Natural killer cell (primary cell): ENCODE measurements at regions of chr18 and their contacts with region 1.

Region 1: DNA sequence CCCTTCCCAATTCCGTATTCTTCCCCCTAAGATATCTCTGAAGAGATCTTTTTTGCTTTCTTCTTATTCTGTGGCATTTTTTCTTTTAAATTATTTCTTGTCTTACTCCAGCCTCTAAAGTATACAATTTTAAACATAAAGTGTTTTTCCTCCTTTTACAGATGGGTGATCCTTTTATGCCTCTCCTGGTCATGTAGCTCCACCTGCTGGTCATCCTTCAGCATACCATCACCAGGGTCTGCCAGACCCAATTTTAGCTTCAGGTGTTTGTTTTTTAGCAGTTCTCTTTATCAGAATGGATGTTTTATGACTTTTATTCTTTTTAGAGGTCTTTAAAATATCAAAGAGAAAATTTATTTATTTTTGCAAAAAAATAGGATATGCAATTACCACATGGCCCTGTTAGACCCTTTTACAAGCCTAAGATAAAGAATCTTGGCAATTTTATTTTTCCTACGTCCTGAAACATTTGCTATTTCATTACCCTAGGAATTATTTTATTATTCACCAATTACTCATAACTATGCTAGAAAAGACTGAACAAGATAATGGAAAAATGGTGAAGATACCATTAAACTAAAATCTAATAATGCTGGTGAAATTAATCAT is 55.5 kb downstream of the PIGN start:
- DNase-seq: peak; percentile 26 to 82
- ATAC-seq: peak; percentile 42 to 78 (median 70)
- H3K4me3 ChIP-seq: no peak overlapping the region
- H3K4me3 Mint-ChIP-seq: no peak overlapping the region
- H3K27ac ChIP-seq: no peak overlapping the region
- H3K27ac Mint-ChIP-seq: no peak overlapping the region
- H3K4me1 ChIP-seq: no peaks in the 10 kb centered on the region
- H3K4me1 Mint-ChIP-seq: no peaks in the 10 kb centered on the region
- H3K27me3 ChIP-seq: no peaks in the 10 kb centered on the region
- H3K27me3 Mint-ChIP-seq: no peaks in the 10 kb centered on the region
- CTCF ChIP-seq: peak; percentile 99

Region 2: GRCh38 chr18:61551586-61551985 is 579.8 kb before region 1 on chr18:
- intact Hi-C with region 1: loop called (anchors 1 kb)
- DNase-seq: peak in 1 of 2 donors; percentile 58
- ATAC-seq: peak in 1 of 3 donors; percentile 52
- H3K4me3 ChIP-seq: no peak overlapping the region
- H3K4me3 Mint-ChIP-seq: no peak overlapping the region
- H3K27ac ChIP-seq: no peak overlapping the region
- H3K27ac Mint-ChIP-seq: no peak overlapping the region
- H3K4me1 ChIP-seq: no peaks in the 10 kb centered on the region
- H3K4me1 Mint-ChIP-seq: peaks cover 0 to 4% of the 10 kb centered on the region in 2 donors
- H3K27me3 ChIP-seq: no peaks in the 10 kb centered on the region
- H3K27me3 Mint-ChIP-seq: peaks cover 0 to 18% of the 10 kb centered on the region in 2 donors
- CTCF ChIP-seq: peak; percentile 57

Region 3: GRCh38 chr18:61581578-61582201 is 549.7 kb before region 1 on chr18:
- intact Hi-C with region 1: loop called (anchors 1 kb)
- DNase-seq: peak; percentile 65 to 72
- ATAC-seq: peak; percentile 71 to 90 (median 77)
- H3K4me3 ChIP-seq: no peak overlapping the region
- H3K4me3 Mint-ChIP-seq: peak overlapping the region; percentile 21
- H3K27ac ChIP-seq: no peak overlapping the region
- H3K27ac Mint-ChIP-seq: no peak overlapping the region
- H3K4me1 ChIP-seq: peaks cover 7% of the 10 kb centered on the region
- H3K4me1 Mint-ChIP-seq: peaks cover 7 to 10% of the 10 kb centered on the region in 2 donors
- H3K27me3 ChIP-seq: peaks cover 5% of the 10 kb centered on the region
- H3K27me3 Mint-ChIP-seq: peaks cover 27 to 56% of the 10 kb centered on the region in 2 donors
- CTCF ChIP-seq: peak; percentile 88

Region 4: GRCh38 chr18:61635901-61636528 is 495.4 kb before region 1 on chr18:
- intact Hi-C with region 1: loop called (anchors 1 kb)
- DNase-seq: peak in 1 of 2 donors; percentile 56
- ATAC-seq: peak in 1 of 3 donors; percentile 38
- H3K4me3 ChIP-seq: no peak overlapping the region
- H3K4me3 Mint-ChIP-seq: no peak overlapping the region
- H3K27ac ChIP-seq: no peak overlapping the region
- H3K27ac Mint-ChIP-seq: no peak overlapping the region
- H3K4me1 ChIP-seq: no peaks in the 10 kb centered on the region
- H3K4me1 Mint-ChIP-seq: peaks cover 0 to 5% of the 10 kb centered on the region in 2 donors
- H3K27me3 ChIP-seq: peaks cover 6% of the 10 kb centered on the region
- H3K27me3 Mint-ChIP-seq: peaks cover 12 to 16% of the 10 kb centered on the region in 2 donors
- CTCF ChIP-seq: peak; percentile 43

Region 5: DNA sequence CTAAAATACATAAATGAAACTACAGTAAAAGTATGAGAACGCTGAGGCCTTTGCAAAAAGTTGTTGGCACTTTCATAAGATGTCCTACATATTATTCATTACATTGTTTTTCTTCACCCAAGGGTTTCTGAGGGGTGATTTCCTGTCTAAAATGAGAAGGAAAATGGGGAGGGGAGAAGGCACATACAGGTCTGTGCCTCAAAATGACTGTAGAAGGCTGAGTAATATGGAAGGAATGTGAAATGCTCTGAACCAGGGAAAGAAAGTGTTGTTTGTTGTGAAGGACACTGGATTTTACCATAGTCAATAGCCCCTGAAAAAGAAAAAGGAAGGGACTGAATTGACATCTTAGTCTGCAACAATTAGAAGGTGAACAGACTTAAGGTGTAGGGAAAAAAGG is 139.1 kb before region 1 on chr18:
- intact Hi-C with region 1: no loop called
- DNase-seq: no peak
- ATAC-seq: no peak
- H3K4me3 ChIP-seq: no peak overlapping the region
- H3K4me3 Mint-ChIP-seq: no peak overlapping the region
- H3K27ac ChIP-seq: no peak overlapping the region
- H3K27ac Mint-ChIP-seq: no peak overlapping the region
- H3K4me1 ChIP-seq: no peaks in the 10 kb centered on the region
- H3K4me1 Mint-ChIP-seq: no peaks in the 10 kb centered on the region
- H3K27me3 ChIP-seq: no peaks in the 10 kb centered on the region
- H3K27me3 Mint-ChIP-seq: peaks cover 7 to 8% of the 10 kb centered on the region in 2 donors
- CTCF ChIP-seq: no peak